Left colon (tissue), 2 donors: ENCODE measurements at regions of chr20 and their contacts with region 1.

Region 1: GRCh38 chr20:33647603-33648395 is 14.3 kb upstream of the C20orf144 start:
- DNase-seq: no peak
- ATAC-seq: no peak

Region 2: GRCh38 chr20:33460711-33461110 is 187.1 kb before region 1 on chr20:
- intact Hi-C with region 1: loop called in 1 of 2 experiments (anchors 5 kb)
- DNase-seq: peak; percentile 51 to 56
- ATAC-seq: peak; percentile 81

Region 3: DNA sequence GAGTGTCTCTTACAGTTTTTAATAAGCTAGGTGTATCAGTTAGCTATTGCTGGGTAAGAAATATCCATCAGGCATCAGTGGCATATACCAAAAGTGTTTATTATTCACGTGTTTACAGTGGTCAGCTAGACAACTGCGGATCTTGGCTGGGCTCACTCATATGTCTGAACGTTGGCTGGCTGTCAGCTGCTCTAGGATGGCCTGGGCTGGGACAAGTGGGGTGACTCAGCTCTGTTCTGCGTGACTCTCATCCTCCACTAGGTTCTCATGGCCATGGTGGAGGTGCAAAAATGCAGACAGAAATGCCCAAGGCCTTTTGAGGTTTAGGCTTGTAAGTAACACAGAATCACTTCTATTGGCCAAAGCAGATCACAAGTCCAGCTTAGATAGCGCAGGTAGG is 106.0 kb after region 1 on chr20:
- intact Hi-C with region 1: no loop called
- DNase-seq: no peak
- ATAC-seq: no peak